OCI-LY7 (cell line): ENCODE measurements at regions of chr2 and their contacts with region 1.

Region 1: GRCh38 chr2:27050281-27050995 is 1.0 kb upstream of the AGBL5 start:
- DNase-seq: peak; percentile 90
- H3K4me3 ChIP-seq: peak overlapping the region; percentile 90
- H3K27ac ChIP-seq: peak overlapping the region; percentile 89
- H3K4me1 ChIP-seq: peaks cover 20% of the 10 kb centered on the region
- CTCF ChIP-seq: peak; percentile 39; the same call in 1 of the 2 replicates

Region 2: GRCh38 chr2:27032495-27033252 is 17.8 kb before region 1 on chr2 and contains the start of gene TMEM214:
- CTCF ChIA-PET with region 1: no interaction called
- POLR2A ChIA-PET with region 1: interaction called, 29 read pairs
- intact Hi-C with region 1: loop called (anchors 1 kb)
- DNase-seq: peak; percentile 87
- H3K4me3 ChIP-seq: peak within 1 kb of the TSS; percentile 95
- H3K27ac ChIP-seq: peak within 1 kb of the TSS; percentile 15
- H3K4me1 ChIP-seq: peaks cover 16% of the 10 kb centered on the region
- CTCF ChIP-seq: no peak
- total RNA-seq, gene TMEM214: 32.0 and 32.6 TPM in 2 replicates

Region 3: GRCh38 chr2:27071277-27071989 is 21.0 kb after region 1 on chr2 and contains the start of gene OST4:
- CTCF ChIA-PET with region 1: no interaction called
- POLR2A ChIA-PET with region 1: interaction called, 18 read pairs
- intact Hi-C with region 1: loop called (anchors 1 kb)
- DNase-seq: peak; percentile 94
- H3K4me3 ChIP-seq: peak within 1 kb of the TSS; percentile 93
- H3K27ac ChIP-seq: peak within 1 kb of the TSS; percentile 53
- H3K4me1 ChIP-seq: peaks cover 56% of the 10 kb centered on the region
- CTCF ChIP-seq: peak; percentile 53
- total RNA-seq, gene OST4: 147 and 214 TPM in 2 replicates

Region 4: DNA sequence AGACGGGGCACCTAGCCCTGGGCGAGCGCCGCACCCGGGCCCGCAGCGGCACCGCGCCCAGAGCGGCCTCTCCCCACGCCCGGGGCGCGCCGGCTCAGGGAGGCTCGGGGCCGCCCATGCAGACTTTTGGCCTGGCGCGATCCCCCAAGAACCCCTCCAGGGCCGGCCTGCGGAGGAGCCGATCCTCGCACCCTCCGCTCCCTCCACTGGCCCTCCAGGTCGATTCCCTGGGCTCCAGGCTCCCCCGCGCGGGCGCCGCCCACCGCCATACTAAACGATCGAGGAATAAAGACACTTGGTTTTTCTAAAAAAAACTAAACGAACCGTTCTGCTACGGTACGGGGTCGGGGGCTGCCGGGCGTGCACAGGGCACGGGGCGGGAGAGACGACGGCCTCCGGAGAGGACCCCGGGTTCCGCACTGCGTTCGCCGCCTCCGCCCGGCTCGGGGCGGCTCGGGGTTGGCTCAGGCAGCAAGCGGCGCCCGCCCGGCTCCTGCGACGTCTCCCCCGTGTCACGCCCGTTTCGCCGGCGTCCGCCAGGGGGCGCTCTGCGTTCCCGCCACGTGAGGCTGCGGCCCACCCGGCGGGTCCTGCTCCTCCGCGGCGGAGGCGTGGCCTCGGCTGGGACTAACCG is 35.8 kb after region 1 on chr2:
- CTCF ChIA-PET with region 1: interaction called, 5 read pairs
- POLR2A ChIA-PET with region 1: interaction called, 3 read pairs
- intact Hi-C with region 1: loop called (anchors 1 kb)
- DNase-seq: peak; percentile 97
- H3K4me3 ChIP-seq: peak overlapping the region; percentile 73
- H3K27ac ChIP-seq: peak overlapping the region; percentile 38
- H3K4me1 ChIP-seq: peaks cover 46% of the 10 kb centered on the region
- CTCF ChIP-seq: peak; percentile 79

Region 5: GRCh38 chr2:27191053-27191829 is 140.8 kb after region 1 on chr2:
- CTCF ChIA-PET with region 1: no interaction called
- POLR2A ChIA-PET with region 1: no interaction called
- intact Hi-C with region 1: loop called (anchors 5 kb)
- DNase-seq: peak; percentile 89
- H3K4me3 ChIP-seq: no peak overlapping the region
- H3K27ac ChIP-seq: peak overlapping the region; percentile 32
- H3K4me1 ChIP-seq: peaks cover 56% of the 10 kb centered on the region
- CTCF ChIP-seq: peak; percentile 97

Region 6: DNA sequence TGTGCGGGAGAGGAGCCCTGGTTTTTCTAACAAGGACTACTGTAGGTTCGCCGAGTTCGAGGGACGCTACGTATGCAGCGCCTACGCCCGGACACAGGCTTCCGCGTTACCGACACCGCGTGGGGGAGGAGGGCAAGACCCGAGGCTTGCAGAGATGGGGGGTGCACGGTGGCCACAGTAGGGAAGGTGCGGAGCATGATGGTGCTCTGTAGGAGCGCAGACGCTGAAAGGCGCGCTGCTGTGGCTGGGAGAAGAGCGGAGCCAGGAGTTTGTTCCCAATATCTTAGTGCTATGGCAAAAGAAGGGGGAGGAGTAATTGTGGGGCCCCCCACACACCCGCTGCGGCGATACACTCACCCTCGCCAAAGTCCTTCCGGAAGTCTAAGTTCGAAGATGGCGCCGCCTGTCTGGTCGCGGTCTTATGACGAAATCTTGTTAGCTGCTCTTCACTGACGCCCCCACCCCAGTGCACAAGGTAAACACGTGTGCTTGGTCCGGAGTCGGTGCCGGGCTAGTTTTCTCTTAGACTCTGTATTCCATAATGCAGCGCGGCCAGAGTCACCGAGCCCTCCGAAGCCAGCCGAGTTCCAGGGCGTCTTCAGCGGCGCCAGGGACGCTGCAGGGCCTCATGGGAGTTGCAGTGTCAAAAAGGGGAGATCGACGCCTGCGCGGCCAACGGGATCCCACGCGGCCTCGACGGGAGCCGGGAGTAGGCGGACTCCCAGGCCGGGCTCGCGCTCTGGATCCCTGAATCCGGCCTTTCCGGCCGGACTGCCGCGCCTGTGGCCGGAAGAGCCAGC is 306.1 kb after region 1 on chr2 and contains the start of gene GTF3C2:
- CTCF ChIA-PET with region 1: no interaction called
- POLR2A ChIA-PET with region 1: no interaction called
- intact Hi-C with region 1: loop called (anchors 2 kb)
- DNase-seq: peak; percentile 99
- H3K4me3 ChIP-seq: peak within 1 kb of the TSS; percentile 77
- H3K27ac ChIP-seq: peak within 1 kb of the TSS; percentile 88
- H3K4me1 ChIP-seq: peaks cover 29% of the 10 kb centered on the region
- CTCF ChIP-seq: no peak
- total RNA-seq, gene GTF3C2: 54.2 and 56.9 TPM in 2 replicates